Colonic mucosa (tissue), 4 donors: ENCODE measurements at regions of chr3 and their contacts with region 1.

Region 1: GRCh38 chr3:125585595-125586223 is 9.6 kb downstream of the OSBPL11 start:
- DNase-seq: peak; percentile 63
- H3K4me3 ChIP-seq: no peak overlapping the region
- H3K27ac ChIP-seq: no peak overlapping the region
- H3K4me1 ChIP-seq: no peaks in the 10 kb centered on the region
- H3K27me3 ChIP-seq: no peaks in the 10 kb centered on the region
- CTCF ChIP-seq: peak; percentile 78

Region 2: GRCh38 chr3:124995460-124995994 is 590.2 kb before region 1 on chr3:
- intact Hi-C with region 1: loop called (anchors 10 kb)
- DNase-seq: peak; percentile 54
- H3K4me3 ChIP-seq: no peak overlapping the region
- H3K27ac ChIP-seq: no peak overlapping the region
- H3K4me1 ChIP-seq: peaks cover 3% of the 10 kb centered on the region
- H3K27me3 ChIP-seq: no peaks in the 10 kb centered on the region
- CTCF ChIP-seq: peak; percentile 58

Region 3: DNA sequence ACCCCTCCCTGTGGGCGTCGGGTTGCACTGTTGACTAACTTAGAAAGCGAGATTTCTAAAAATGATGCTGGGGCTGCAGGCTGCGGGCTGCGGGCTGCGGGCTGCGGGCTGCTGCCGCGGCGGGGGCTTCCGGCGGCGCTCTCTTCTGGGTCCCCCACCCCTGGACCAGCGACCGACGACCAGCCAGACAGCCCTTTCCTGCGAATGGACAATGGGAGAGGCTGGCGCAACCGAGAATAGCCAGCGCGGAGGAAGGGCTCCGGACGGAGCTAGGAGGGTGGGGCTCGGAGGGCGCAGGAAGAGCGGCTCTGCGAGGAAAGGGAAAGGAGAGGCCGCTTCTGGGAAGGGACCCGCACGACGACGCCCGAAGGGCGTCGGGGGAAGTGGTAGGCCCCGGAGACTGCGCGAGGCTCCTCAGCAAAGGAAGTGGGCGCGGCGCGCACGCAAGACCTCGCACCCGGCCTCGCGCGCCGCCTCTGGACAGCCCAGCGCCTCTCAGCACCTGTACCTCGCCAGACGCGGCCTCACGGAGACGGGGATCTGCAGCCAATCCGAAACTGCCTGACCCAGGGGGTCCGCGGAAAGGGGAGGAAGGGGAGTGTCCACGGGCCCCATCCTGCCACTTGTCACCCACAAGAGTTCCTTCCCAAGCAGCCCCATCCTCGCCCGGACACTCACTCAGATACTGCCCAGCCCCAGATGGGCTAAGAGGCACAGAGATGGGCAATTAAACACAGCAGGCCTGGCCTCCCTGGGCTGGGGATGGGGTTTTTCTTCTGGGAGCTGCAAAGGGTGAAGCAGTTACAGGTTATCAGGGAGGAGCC is 443.9 kb before region 1 on chr3:
- intact Hi-C with region 1: loop called (anchors 10 kb)
- DNase-seq: peak; percentile 60
- H3K4me3 ChIP-seq: peak overlapping the region; percentile 27
- H3K27ac ChIP-seq: peak overlapping the region; percentile 21
- H3K4me1 ChIP-seq: no peaks in the 10 kb centered on the region
- H3K27me3 ChIP-seq: no peaks in the 10 kb centered on the region
- CTCF ChIP-seq: no peak

Region 4: DNA sequence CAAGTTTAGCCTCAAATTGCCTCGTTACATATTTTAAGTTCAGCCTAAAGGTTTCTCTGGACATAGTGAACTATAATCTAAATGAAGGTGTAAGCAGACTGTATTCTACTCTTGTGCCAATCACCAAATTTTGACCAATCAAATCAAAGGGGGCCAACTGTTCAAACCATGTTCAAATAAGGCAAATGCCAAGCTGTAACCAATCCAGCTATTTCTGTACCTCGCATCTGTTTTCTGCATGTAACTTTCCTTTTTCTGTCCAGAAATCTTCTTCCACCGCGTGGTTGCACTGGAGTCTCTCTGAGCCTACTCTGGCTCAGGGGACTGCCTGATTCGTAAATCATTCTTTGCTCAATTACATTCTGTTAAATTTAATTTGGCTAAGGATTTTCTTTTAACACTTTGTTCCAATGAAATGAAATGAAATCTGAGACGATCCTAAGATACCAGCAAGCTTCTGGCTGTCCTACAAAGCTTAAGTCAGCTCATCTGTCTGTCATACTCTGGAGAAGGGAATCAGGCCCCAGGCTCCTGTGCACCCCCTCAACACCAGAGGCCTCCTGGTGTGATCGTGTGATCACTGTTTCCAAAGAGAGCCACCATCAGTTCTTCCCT is 157.4 kb before region 1 on chr3:
- intact Hi-C with region 1: no loop called
- DNase-seq: no peak
- H3K4me3 ChIP-seq: no peak overlapping the region
- H3K27ac ChIP-seq: no peak overlapping the region
- H3K4me1 ChIP-seq: no peaks in the 10 kb centered on the region
- H3K27me3 ChIP-seq: no peaks in the 10 kb centered on the region
- CTCF ChIP-seq: no peak

Region 5: GRCh38 chr3:125443923-125444322 is 141.8 kb before region 1 on chr3:
- intact Hi-C with region 1: loop called (anchors 10 kb)
- DNase-seq: no peak
- H3K4me3 ChIP-seq: no peak overlapping the region
- H3K27ac ChIP-seq: no peak overlapping the region
- H3K4me1 ChIP-seq: no peaks in the 10 kb centered on the region
- H3K27me3 ChIP-seq: no peaks in the 10 kb centered on the region
- CTCF ChIP-seq: no peak

Region 6: DNA sequence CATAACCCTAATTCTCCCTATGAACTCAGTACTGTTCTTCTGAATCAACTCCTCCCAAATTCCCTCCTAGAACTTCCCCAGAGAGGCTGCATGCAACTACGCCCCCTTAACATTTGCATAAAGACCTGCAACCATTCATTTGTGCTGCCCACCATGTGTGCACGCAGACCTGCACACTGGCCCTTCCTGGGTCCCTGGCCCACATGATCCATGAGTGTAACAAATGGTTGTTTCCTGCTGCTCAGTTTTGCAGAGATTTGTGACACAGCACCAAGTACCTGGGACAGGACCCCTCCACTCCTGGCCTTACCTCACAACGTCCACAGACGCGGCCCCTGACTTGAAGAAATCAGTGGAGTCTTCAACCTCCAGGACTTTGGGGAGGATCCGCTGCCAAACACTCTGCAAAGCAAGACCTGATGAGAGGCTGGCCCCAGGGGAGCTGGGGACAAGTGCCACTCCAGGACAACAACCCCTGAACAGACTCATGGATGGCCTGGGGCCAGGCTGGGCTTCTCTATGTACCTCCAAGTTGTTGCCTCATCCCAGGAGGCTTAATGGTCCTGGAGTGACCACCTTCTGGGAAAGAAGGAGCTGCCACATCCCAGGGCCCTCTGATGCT is 560.9 kb after region 1 on chr3:
- intact Hi-C with region 1: no loop called
- DNase-seq: peak; percentile 8
- H3K4me3 ChIP-seq: no peak overlapping the region
- H3K27ac ChIP-seq: no peak overlapping the region
- H3K4me1 ChIP-seq: no peaks in the 10 kb centered on the region
- H3K27me3 ChIP-seq: no peaks in the 10 kb centered on the region
- CTCF ChIP-seq: no peak